ENCODE measurements at regions of chr1 and their contacts with region 1.

Region 1: DNA sequence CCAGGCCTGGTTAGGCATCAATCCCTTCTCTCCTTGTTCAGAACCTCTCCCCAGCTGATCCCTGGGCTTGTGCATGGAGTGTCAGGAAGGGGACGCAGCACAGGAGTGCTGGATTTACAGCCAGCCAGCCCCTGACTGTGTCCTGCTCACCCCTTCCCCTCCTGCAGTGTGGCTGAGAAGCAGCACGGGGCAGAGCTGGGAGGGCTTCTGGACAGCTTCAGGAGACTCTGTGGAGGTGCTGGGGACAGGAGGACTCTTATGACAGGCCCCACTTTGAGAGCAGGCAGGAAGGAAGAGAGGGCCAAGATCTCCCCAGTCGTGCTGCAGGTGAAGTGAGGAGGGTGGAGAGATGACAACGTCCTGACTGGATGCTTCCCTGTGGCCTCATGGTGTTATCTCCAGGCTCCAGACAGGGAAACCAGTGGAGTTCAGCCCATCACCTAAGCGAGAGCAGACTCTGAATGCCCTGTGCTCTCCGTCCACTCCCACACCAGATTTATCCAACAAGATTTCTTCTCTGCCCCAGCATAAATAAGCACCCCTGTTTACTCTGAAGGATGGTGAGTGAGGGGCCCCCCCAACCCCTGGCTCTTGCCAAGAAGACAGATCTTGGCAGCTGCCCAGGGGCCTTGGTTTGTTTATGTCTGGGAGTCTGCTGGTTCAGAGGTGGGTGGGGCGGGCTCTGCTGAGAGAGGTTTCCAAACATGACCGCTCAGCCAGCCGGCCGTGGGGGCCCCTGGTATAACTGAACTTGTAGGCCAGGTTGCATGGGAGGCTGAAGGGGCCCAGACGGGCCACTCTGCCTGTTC is 21.3 kb downstream of the TMCC2 start:
- DNase-seq: peak; percentile 36 to 87 (median 77)
- ATAC-seq: peak; percentile 59 to 91 (median 78)
- H3K4me3 ChIP-seq: no peak overlapping the region
- H3K27ac ChIP-seq: peak overlapping the region in 2 of 4 donors; percentile 3 to 53
- H3K4me1 ChIP-seq: peaks cover 5 to 9% (median 8%) of the 10 kb centered on the region in 3 donors
- H3K27me3 ChIP-seq: no peaks in the 10 kb centered on the region
- CTCF ChIP-seq: no peak

Region 2: DNA sequence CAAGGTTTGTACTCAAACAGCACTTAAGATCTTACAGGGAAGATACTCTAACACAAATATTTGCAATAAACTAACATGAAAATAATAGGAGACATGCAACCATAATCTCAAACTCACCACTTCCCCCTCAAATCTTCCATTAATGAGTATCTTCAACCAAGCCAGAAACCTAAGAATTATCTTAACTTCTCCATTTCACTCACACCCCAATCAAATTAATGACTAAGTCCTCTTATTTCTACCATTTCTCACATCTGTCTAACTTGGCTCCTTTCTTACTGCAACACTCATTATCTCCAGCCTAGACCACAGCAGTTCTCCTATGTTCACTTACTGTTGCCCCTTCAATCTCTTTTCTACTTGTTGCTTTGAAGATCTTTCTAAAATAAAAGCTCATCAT is 137.6 kb before region 1 on chr1:
- intact Hi-C with region 1: loop called in 1 of 3 experiments (anchors 10 kb)
- DNase-seq: no peak
- ATAC-seq: no peak
- H3K4me3 ChIP-seq: no peak overlapping the region
- H3K27ac ChIP-seq: no peak overlapping the region
- H3K4me1 ChIP-seq: no peaks in the 10 kb centered on the region
- H3K27me3 ChIP-seq: no peaks in the 10 kb centered on the region
- CTCF ChIP-seq: no peak

Region 3: DNA sequence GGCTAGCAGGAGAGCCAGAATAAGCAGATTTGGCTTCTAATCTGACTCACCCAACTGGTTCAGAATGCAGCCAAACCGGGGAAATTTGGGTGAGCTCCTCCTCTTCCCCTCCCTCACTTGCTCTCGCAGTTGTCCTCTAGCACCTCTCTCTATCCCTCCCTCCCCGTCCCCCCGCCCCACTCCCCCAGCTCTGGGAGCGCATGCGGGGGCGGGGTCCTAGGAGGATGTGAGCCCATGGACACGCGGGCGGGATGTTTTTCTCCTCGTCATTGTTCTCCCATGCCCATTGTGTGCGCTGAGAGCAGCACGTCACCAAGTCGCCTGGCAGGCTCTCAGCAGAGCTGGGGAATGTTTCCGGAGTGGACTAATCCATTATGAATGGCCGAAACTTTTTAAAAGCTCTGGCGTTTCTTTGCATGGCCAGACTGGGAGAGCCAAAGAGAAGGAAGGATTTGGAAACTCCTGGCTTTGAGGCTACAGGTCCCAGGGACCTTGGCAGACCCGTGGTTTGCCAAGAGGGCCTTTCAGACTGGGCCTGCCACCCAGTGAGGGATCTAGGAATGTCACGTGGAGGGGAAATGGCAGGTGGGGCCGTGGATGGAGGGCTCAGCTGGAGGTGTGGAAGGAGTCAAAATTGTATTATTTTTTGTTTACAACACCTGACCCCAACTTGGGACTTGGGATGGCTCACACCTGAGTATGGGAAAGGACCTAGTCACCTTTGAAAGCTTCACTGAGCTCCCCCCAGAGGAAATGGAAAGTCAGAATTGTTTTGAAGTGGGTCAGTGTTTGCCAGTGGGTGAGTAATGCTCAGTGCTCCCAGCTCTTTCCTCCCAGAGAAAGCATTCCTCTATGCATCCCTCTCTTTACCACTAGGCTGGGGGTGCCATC is 294.7 kb after region 1 on chr1:
- intact Hi-C with region 1: no loop called
- DNase-seq: peak in 4 of 6 donors; percentile 47 to 65 (median 50)
- ATAC-seq: peak; percentile 73 to 90 (median 88)
- H3K4me3 ChIP-seq: peak overlapping the region in 2 of 4 donors; percentile 4 to 21
- H3K27ac ChIP-seq: peak overlapping the region in 3 of 4 donors; percentile 7 to 69 (median 62)
- H3K4me1 ChIP-seq: no peaks in the 10 kb centered on the region
- H3K27me3 ChIP-seq: no peaks in the 10 kb centered on the region
- CTCF ChIP-seq: no peak

Measured in pancreas (tissue), 10 donors.